Tibial artery (tissue), 4 donors: ENCODE measurements at regions of chr7 and their contacts with region 1.

Region 1: DNA sequence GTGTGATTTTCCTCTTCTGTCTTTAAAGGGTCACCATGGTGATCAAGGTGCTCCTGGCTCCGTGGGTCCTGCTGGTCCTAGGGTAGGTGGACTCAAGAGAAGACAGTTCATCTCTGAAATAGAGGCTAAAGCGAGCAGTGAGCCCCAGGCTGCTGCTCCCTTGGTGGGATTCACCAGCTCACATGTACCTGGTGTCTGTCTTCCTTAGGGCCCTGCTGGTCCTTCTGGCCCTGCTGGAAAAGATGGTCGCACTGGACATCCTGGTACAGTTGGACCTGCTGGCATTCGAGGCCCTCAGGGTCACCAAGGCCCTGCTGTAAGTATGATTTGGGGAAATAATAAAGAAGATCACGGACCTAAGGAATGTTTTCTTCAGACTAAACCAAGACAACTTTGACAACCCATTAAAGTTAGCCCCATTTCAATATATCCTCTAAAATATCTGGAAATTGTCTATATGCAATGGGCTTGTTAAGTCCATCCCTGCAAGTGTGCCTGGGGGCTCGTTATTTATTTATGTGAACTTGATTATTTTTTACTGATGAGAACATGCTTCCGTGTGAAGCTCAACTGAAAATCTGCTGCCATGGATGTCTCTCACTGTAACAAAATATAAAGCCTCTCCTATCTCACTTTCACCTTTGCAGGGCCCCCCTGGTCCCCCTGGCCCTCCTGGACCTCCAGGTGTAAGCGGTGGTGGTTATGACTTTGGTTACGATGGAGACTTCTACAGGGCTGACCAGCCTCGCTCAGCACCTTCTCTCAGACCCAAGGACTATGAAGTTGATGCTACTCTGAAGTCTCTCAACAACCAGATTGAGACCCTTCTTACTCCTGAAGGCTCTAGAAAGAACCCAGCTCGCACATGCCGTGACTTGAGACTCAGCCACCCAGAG is 32.5 kb downstream of the COL1A2 start:
- DNase-seq: no peak
- H3K4me3 ChIP-seq: no peak overlapping the region
- H3K27ac ChIP-seq: peak overlapping the region; percentile 15 to 93
- H3K4me1 ChIP-seq: peaks cover 0 to 20% (median 0%) of the 10 kb centered on the region in 4 donors
- H3K27me3 ChIP-seq: no peaks in the 10 kb centered on the region
- CTCF ChIP-seq: no peak

Region 2: GRCh38 chr7:94295850-94296249 is 131.4 kb before region 1 on chr7:
- intact Hi-C with region 1: loop called (anchors 5 kb)
- DNase-seq: no peak
- H3K4me3 ChIP-seq: peak overlapping the region; percentile 26 to 35
- H3K27ac ChIP-seq: peak overlapping the region; percentile 79 to 86
- H3K4me1 ChIP-seq: peaks cover 0 to 52% (median 27%) of the 10 kb centered on the region in 4 donors
- H3K27me3 ChIP-seq: no peaks in the 10 kb centered on the region
- CTCF ChIP-seq: peak; percentile 64 to 85

Region 3: GRCh38 chr7:94567396-94567795 is 140.2 kb after region 1 on chr7:
- intact Hi-C with region 1: no loop called
- DNase-seq: no peak
- H3K4me3 ChIP-seq: no peak overlapping the region
- H3K27ac ChIP-seq: no peak overlapping the region
- H3K4me1 ChIP-seq: no peaks in the 10 kb centered on the region
- H3K27me3 ChIP-seq: no peaks in the 10 kb centered on the region
- CTCF ChIP-seq: no peak

Region 4: GRCh38 chr7:95303038-95303905 is 876.0 kb after region 1 on chr7:
- intact Hi-C with region 1: no loop called
- DNase-seq: no peak
- H3K4me3 ChIP-seq: no peak overlapping the region
- H3K27ac ChIP-seq: no peak overlapping the region
- H3K4me1 ChIP-seq: no peaks in the 10 kb centered on the region
- H3K27me3 ChIP-seq: no peaks in the 10 kb centered on the region
- CTCF ChIP-seq: no peak